Ascending aorta (tissue), 2 donors: ENCODE measurements at regions of chr5 and their contacts with region 1.

Region 1: GRCh38 chr5:158701406-158702177 is 398.1 kb downstream of the EBF1 start:
- DNase-seq: peak in 1 of 2 donors; percentile 92
- H3K4me3 ChIP-seq: no peak overlapping the region
- H3K27ac ChIP-seq: peak overlapping the region; percentile 69 to 80
- H3K4me1 ChIP-seq: peaks cover 9 to 54% of the 10 kb centered on the region in 2 donors
- H3K27me3 ChIP-seq: no peaks in the 10 kb centered on the region
- CTCF ChIP-seq: no peak

Region 2: GRCh38 chr5:158739951-158740757 is 38.6 kb after region 1 on chr5:
- intact Hi-C with region 1: loop called (anchors 5 kb)
- DNase-seq: peak in 1 of 2 donors; percentile 68
- H3K4me3 ChIP-seq: peak overlapping the region in 1 of 2 donors; percentile 13
- H3K27ac ChIP-seq: peak overlapping the region; percentile 15 to 30
- H3K4me1 ChIP-seq: peaks cover 3 to 20% of the 10 kb centered on the region in 2 donors
- H3K27me3 ChIP-seq: no peaks in the 10 kb centered on the region
- CTCF ChIP-seq: peak; percentile 29 to 64 (median 45)

Region 3: GRCh38 chr5:158758675-158759074 is 57.1 kb after region 1 on chr5:
- intact Hi-C with region 1: loop called (anchors 5 kb)
- DNase-seq: no peak
- H3K4me3 ChIP-seq: no peak overlapping the region
- H3K27ac ChIP-seq: no peak overlapping the region
- H3K4me1 ChIP-seq: peaks cover 2 to 29% of the 10 kb centered on the region in 2 donors
- H3K27me3 ChIP-seq: no peaks in the 10 kb centered on the region
- CTCF ChIP-seq: no peak

Region 4: DNA sequence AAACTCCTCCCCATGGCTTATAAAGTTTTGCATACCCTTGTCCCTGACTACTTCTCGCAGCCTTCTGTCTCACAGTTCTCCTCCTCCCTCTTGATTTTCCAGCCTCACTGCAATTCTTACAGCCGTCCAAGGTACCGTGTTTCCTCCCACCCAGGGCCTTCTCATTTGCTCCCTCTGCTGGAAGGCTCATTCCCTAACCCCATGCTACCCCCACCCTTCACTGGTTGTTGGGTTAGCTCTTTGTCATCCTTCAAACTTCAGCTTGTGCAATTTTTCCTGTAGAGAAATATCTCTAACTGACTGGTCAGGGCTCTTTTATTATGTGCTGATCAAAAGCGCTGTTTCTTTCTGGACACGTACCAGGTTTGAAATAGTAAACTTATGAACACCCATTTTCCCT is 68.9 kb after region 1 on chr5:
- intact Hi-C with region 1: loop called (anchors 5 kb)
- DNase-seq: no peak
- H3K4me3 ChIP-seq: no peak overlapping the region
- H3K27ac ChIP-seq: peak overlapping the region; percentile 55 to 70
- H3K4me1 ChIP-seq: peaks cover 3 to 55% of the 10 kb centered on the region in 2 donors
- H3K27me3 ChIP-seq: no peaks in the 10 kb centered on the region
- CTCF ChIP-seq: peak in 1 of 3 experiments; percentile 23